ENCODE measurements at regions of chr13 and their contacts with region 1.

Region 1: DNA sequence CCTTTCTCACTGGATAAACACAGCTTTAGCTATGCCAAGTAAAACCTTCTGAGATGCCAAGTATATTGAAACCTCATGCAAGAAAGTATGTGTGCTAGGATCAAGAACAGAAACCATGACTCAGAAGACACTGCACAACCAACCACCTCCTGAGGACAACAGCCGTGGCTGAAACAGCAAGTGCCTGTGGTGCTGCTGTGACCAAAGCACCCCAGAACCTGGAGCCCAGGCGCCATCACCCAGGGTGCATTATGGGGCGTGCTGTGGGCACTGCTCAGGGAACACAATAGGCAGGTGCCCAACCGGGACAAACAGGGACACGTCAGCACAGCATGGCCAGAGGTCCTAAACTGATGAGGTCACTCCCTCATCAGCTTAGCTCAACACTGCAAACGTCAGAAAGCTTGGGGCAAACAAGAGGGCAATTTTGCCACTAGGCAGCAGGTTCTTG is 101.3 kb upstream of the SLC15A1 start:
- DNase-seq: no peak
- H3K4me3 ChIP-seq: no peak overlapping the region
- H3K27ac ChIP-seq: no peak overlapping the region
- H3K4me1 ChIP-seq: peaks cover 31% of the 10 kb centered on the region
- H3K27me3 ChIP-seq: no peaks in the 10 kb centered on the region
- CTCF ChIP-seq: no peak
- POLR2A ChIP-seq: no peak

Region 2: GRCh38 chr13:98869408-98870090 is 15.8 kb after region 1 on chr13:
- CTCF ChIA-PET with region 1: interaction called, 21 read pairs
- POLR2A ChIA-PET with region 1: no interaction called
- dilution Hi-C with region 1: no loop called
- intact Hi-C with region 1: no loop called
- DNase-seq: peak; percentile 79
- H3K4me3 ChIP-seq: no peak overlapping the region
- H3K27ac ChIP-seq: no peak overlapping the region
- H3K4me1 ChIP-seq: no peaks in the 10 kb centered on the region
- H3K27me3 ChIP-seq: no peaks in the 10 kb centered on the region
- CTCF ChIP-seq: peak in 1 of 2 donors; percentile 14
- POLR2A ChIP-seq: no peak

Measured in endothelial cell of umbilical vein (primary cell).